ENCODE measurements at regions of chr2 and their contacts with region 1.

Region 1: DNA sequence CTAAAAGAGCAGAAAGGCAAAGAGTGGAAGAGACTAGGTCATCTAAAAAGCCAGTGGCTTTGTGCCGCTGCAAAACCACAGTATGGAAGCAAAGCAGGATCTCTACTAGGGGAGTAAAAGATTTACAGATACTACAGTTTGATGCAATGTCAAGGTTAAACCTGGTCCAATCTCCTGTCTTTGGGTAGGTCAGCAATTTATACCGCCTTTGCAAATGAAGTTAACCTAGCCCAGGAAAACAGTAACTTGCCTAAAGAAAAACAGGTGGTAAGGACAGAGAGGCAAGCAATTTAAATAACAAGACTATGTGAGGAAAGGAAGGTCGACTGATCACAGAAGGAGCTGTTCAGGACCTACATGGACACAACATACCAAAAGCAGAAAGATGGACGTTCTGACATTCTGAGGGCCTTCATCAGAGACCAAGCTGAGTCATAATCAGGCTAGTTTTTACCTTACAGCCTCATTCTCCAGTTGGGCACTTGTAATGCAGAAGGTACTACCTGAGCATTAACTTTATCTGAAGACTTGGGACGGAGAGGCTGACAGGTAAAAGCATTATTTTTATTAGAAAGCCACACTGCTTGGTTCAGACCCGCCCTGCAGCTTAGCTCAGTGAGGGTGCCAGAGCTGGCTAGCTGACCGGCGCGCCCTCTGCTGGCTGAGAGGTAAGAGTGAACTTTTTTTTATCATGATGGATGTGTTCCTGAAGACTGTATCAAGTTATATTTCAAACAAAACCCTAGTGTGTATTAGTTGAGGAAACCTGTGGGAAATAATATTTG is 15.9 kb downstream of the CDKL4 start:
- DNase-seq: peak; percentile 85
- ATAC-seq: peak; percentile 87
- H3K4me3 ChIP-seq: peak overlapping the region in 1 of 5 experiments; percentile 16
- H3K4me3 Mint-ChIP-seq: peak overlapping the region; percentile 77
- H3K27ac ChIP-seq: no peak overlapping the region
- H3K27ac Mint-ChIP-seq: no peak overlapping the region
- H3K4me1 ChIP-seq: peaks cover 6 to 11% of the 10 kb centered on the region in 2 donors
- H3K4me1 Mint-ChIP-seq: peaks cover 12% of the 10 kb centered on the region
- H3K27me3 ChIP-seq: no peaks in the 10 kb centered on the region
- H3K27me3 Mint-ChIP-seq: no peaks in the 10 kb centered on the region
- CTCF ChIP-seq: peak; percentile 92

Region 2: DNA sequence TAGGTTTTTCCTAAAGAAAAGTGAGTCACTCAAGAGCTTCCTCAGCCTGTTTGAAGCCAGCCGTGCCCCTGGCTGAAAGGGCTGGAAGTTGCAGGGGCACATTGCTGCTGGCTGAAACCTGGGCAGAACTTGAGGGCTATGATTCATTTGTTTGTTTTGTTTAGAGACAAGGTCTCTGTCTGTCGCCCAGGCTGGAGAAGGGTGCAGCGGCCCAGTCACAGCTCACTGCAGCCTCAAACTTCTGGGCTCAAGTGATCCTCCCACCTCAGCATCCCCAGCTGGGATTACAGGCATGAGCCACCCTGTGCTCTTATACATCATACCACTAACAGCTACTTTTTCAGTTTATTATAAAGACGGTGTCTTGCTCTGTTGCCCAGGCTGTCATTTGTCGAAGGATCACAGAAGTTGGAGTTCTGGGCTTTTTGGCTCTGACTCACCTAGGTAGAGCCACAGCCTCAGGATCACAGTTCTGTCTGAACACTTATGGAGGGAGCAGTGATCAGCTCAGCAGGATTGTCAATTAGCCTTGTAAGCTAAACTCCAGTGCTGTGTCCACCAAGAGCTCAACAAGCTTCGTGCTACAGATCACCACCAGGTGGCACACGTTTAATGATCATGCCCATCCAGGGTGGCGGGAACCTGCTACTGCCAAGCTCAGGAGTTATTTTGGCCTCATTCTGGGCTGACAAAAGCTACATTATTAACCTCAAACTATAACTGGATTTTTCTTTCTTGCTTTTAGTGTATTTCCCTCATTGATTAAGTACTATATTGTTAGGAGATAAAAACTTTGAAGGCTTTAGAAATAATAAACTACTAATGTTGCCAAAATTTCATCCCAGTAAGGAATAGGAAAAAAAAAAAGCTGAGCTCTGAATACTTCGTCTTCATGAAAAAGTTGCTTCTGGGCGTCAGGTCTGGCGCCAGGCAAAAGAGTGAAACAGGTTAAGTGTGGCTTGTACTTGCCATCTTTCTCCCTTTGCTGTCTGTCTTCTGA is 280.3 kb before region 1 on chr2:
- CTCF ChIA-PET with region 1: interaction called, 201 read pairs
- POLR2A ChIA-PET with region 1: no interaction called
- intact Hi-C with region 1: no loop called
- DNase-seq: peak; percentile 65
- ATAC-seq: peak; percentile 57
- H3K4me3 ChIP-seq: no peak overlapping the region
- H3K4me3 Mint-ChIP-seq: no peak overlapping the region
- H3K27ac ChIP-seq: no peak overlapping the region
- H3K27ac Mint-ChIP-seq: no peak overlapping the region
- H3K4me1 ChIP-seq: no peaks in the 10 kb centered on the region
- H3K4me1 Mint-ChIP-seq: no peaks in the 10 kb centered on the region
- H3K27me3 ChIP-seq: no peaks in the 10 kb centered on the region
- H3K27me3 Mint-ChIP-seq: no peaks in the 10 kb centered on the region
- CTCF ChIP-seq: peak; percentile 77

Region 3: DNA sequence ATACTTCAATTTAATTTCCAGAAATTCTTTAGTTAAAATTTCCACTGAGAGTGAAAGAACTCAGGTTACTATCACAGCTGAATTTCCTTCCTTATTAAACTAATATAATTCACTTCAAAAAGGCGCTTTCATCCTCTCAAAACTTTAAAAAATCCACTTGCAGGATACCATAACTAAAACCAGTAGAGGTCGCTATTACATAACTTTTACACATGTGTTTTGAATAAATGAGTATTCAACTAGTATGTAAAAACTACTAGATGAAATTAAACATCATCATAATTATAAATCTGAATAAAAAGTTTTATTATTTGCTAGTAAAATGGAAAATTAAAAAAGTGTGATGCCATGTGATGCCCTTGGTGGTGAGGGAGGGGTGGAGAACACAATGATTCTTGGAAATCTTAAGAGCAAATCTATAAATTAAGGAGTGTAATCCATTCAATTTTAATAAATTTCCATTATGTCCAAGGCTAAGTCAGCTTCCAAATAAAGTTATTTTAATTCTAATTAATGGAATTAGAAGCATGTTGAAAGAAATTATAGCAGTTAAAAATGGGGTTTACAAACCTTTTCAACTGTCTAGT is 168.4 kb before region 1 on chr2:
- CTCF ChIA-PET with region 1: interaction called, 400 read pairs
- POLR2A ChIA-PET with region 1: no interaction called
- intact Hi-C with region 1: loop called (anchors 1 kb)
- DNase-seq: peak; percentile 65
- ATAC-seq: no peak
- H3K4me3 ChIP-seq: no peak overlapping the region
- H3K4me3 Mint-ChIP-seq: no peak overlapping the region
- H3K27ac ChIP-seq: no peak overlapping the region
- H3K27ac Mint-ChIP-seq: no peak overlapping the region
- H3K4me1 ChIP-seq: no peaks in the 10 kb centered on the region
- H3K4me1 Mint-ChIP-seq: no peaks in the 10 kb centered on the region
- H3K27me3 ChIP-seq: no peaks in the 10 kb centered on the region
- H3K27me3 Mint-ChIP-seq: no peaks in the 10 kb centered on the region
- CTCF ChIP-seq: peak; percentile 91

Region 4: GRCh38 chr2:39094852-39095306 is 132.9 kb before region 1 on chr2:
- CTCF ChIA-PET with region 1: interaction called, 14 read pairs
- POLR2A ChIA-PET with region 1: no interaction called
- intact Hi-C with region 1: no loop called
- DNase-seq: no peak
- ATAC-seq: no peak
- H3K4me3 ChIP-seq: no peak overlapping the region
- H3K4me3 Mint-ChIP-seq: peak overlapping the region; percentile 1
- H3K27ac ChIP-seq: peak overlapping the region in 1 of 2 donors; percentile 38
- H3K27ac Mint-ChIP-seq: no peak overlapping the region
- H3K4me1 ChIP-seq: peaks cover 16 to 25% of the 10 kb centered on the region in 2 donors
- H3K4me1 Mint-ChIP-seq: peaks cover 57% of the 10 kb centered on the region
- H3K27me3 ChIP-seq: no peaks in the 10 kb centered on the region
- H3K27me3 Mint-ChIP-seq: no peaks in the 10 kb centered on the region
- CTCF ChIP-seq: no peak

Region 5: DNA sequence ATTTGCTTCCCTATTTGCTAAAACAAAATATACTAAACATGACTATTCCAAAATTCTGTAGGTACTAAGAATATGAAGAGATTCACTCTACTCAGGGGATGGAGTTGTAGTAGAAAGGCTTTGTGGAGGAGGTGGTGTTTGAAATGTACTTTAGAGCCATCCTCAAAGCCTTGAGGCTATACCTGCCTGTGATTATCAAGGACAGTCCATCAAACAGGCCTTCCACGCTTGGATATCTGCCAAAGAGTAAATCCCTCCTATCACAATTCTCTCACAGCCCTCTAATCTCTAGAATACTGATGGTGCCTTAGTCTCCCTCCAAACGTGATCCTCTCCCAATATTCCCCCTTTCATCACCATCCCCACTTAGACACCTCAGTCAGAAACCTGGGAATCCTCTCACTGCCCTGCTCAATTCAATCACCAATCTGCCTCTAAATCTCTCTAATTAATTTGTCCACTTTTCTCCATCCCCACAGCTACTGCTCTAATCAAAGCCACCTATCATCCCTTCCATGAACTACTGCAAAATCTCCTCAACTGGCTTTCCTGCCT is 120.0 kb before region 1 on chr2:
- CTCF ChIA-PET with region 1: interaction called, 20 read pairs
- POLR2A ChIA-PET with region 1: no interaction called
- intact Hi-C with region 1: no loop called
- DNase-seq: no peak
- ATAC-seq: no peak
- H3K4me3 ChIP-seq: no peak overlapping the region
- H3K4me3 Mint-ChIP-seq: no peak overlapping the region
- H3K27ac ChIP-seq: peak overlapping the region in 1 of 2 donors; percentile 25
- H3K27ac Mint-ChIP-seq: peak overlapping the region; percentile 1
- H3K4me1 ChIP-seq: peaks cover 16% of the 10 kb centered on the region in 2 donors
- H3K4me1 Mint-ChIP-seq: peaks cover 60% of the 10 kb centered on the region
- H3K27me3 ChIP-seq: no peaks in the 10 kb centered on the region
- H3K27me3 Mint-ChIP-seq: no peaks in the 10 kb centered on the region
- CTCF ChIP-seq: no peak

Region 6: GRCh38 chr2:39141331-39142271 is 86.2 kb before region 1 on chr2:
- CTCF ChIA-PET with region 1: interaction called, 18 read pairs
- POLR2A ChIA-PET with region 1: no interaction called
- intact Hi-C with region 1: no loop called
- DNase-seq: peak; percentile 74
- ATAC-seq: peak; percentile 85
- H3K4me3 ChIP-seq: peak overlapping the region in 1 of 5 experiments; percentile 30
- H3K4me3 Mint-ChIP-seq: peak overlapping the region; percentile 69
- H3K27ac ChIP-seq: peak overlapping the region; percentile 50 to 59
- H3K27ac Mint-ChIP-seq: peak overlapping the region; percentile 75
- H3K4me1 ChIP-seq: peaks cover 33 to 37% of the 10 kb centered on the region in 2 donors
- H3K4me1 Mint-ChIP-seq: peaks cover 41% of the 10 kb centered on the region
- H3K27me3 ChIP-seq: no peaks in the 10 kb centered on the region
- H3K27me3 Mint-ChIP-seq: no peaks in the 10 kb centered on the region
- CTCF ChIP-seq: no peak

Region 7: GRCh38 chr2:39728941-39729351 is 501.1 kb after region 1 on chr2:
- CTCF ChIA-PET with region 1: interaction called, 42 read pairs
- POLR2A ChIA-PET with region 1: no interaction called
- intact Hi-C with region 1: loop called (anchors 2 kb)
- DNase-seq: peak; percentile 42
- ATAC-seq: peak; percentile 45
- H3K4me3 ChIP-seq: no peak overlapping the region
- H3K4me3 Mint-ChIP-seq: no peak overlapping the region
- H3K27ac ChIP-seq: no peak overlapping the region
- H3K27ac Mint-ChIP-seq: peak overlapping the region; percentile 38
- H3K4me1 ChIP-seq: peaks cover 0 to 14% of the 10 kb centered on the region in 2 donors
- H3K4me1 Mint-ChIP-seq: peaks cover 9% of the 10 kb centered on the region
- H3K27me3 ChIP-seq: no peaks in the 10 kb centered on the region
- H3K27me3 Mint-ChIP-seq: no peaks in the 10 kb centered on the region
- CTCF ChIP-seq: peak; percentile 79

Measured in B cell (primary cell).